Activated naive CD4-positive, alpha-beta T cell treated with anti-CD3 and anti-CD28 coated beads for 36 hours (primary cell): ENCODE measurements at regions of chr1 and their contacts with region 1.

Region 1: DNA sequence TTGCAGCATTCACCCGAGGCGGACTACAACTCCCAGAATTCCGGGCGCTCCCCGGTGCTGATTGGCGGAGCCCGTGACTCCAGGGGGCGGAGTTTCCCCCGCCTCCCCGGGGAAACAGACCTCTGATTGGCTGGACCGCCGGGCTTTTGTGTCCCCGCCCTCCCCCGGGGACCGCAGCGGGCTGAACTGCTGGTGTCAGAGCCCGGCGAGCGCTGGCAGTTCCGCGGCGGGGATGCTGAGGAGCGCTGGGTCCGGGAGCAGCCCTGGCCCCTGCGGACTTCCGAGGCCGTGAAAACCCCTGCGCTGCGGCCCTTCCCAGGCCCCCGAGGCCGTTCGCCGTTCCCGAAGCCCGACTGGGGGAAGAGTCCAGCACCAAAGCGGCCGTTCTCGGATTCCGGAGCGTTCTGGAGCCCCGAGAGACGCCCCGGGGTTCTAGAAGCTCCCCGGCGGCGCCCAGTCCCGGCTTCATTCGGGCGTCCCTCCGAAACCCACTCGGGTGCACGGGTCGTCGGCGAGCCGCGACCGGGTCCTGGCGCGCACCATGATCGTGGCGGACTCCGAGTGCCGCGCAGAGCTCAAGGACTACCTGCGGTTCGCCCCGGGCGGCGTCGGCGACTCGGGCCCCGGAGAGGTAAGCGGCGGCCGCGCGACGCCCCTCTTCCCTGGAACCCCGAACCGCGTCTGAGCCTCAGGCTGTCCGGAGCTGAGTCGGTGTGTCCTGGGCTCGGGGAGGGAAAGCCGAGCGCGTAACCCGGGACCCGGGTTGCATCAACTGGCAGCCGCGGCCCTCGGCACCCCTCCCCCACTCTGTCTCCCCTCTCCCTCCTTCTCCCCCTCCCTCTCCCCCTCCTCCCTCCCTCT is at the start of gene SESN2:
- DNase-seq: peak; percentile 100
- H3K4me3 Mint-ChIP-seq: peak within 1 kb of the TSS; percentile 68
- H3K27ac Mint-ChIP-seq: peak within 1 kb of the TSS; percentile 94
- H3K4me1 Mint-ChIP-seq: peaks cover 45% of the 10 kb centered on the region
- H3K27me3 Mint-ChIP-seq: no peaks in the 10 kb centered on the region
- total RNA-seq, gene SESN2: 46.2 to 46.9 TPM

Region 2: DNA sequence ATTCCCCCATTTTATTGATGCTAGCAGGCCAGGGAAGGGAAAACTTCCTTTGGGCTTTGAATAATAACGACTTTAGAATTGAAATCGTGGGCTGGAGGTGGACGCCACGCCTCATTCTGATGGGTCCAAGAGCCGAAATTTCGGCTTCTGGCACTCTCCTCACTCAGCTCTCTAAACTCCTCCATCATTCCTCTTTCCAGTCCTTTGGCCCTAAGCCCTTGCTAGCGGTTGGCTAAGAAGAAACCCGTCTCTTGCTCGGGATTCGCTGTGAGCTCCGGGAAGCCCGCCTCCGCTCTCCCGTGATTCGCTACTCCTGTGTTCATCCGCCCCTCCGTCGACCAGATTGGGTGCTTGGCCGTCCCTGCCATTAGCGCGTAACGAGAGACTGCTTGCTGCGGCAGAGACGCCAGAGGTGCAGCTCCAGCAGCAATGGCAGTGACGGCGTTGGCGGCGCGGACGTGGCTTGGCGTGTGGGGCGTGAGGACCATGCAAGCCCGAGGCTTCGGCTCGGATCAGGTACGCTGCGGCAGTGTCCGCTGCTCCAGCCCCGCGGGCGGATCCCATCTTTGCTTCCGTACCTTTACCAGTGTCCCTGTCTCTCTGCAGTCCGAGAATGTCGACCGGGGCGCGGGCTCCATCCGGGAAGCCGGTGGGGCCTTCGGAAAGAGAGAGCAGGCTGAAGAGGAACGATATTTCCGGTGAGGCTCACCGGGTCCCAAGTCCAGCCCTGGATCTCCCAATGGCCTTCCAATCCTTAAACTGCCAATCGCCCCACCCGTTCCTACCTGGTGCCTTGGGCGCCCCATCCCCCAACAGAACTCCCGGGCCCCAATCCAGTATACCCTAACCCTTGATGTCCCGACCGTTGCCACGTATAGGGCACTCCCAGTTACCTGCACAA is 23.5 kb before region 1 on chr1 and contains the start of gene ATP5IF1:
- CTCF ChIA-PET with region 1: no interaction called
- intact Hi-C with region 1: loop called (anchors 1 kb)
- DNase-seq: peak; percentile 98
- H3K4me3 Mint-ChIP-seq: no peak within 1 kb of the TSS
- H3K27ac Mint-ChIP-seq: no peak within 1 kb of the TSS
- H3K4me1 Mint-ChIP-seq: peaks cover 23% of the 10 kb centered on the region
- H3K27me3 Mint-ChIP-seq: no peaks in the 10 kb centered on the region
- total RNA-seq, gene ATP5IF1: 182 to 185 TPM

Region 3: GRCh38 chr1:28301471-28302174 is 42.1 kb after region 1 on chr1:
- CTCF ChIA-PET with region 1: no interaction called
- intact Hi-C with region 1: no loop called
- DNase-seq: no peak
- H3K4me3 Mint-ChIP-seq: no peak overlapping the region
- H3K27ac Mint-ChIP-seq: no peak overlapping the region
- H3K4me1 Mint-ChIP-seq: no peaks in the 10 kb centered on the region
- H3K27me3 Mint-ChIP-seq: peaks cover 2% of the 10 kb centered on the region

Region 4: GRCh38 chr1:28552758-28553663 is 293.5 kb after region 1 on chr1 and contains the start of gene TRNAU1AP:
- CTCF ChIA-PET with region 1: interaction called, 3 read pairs
- intact Hi-C with region 1: loop called (anchors 1 kb)
- DNase-seq: peak; percentile 99
- H3K4me3 Mint-ChIP-seq: peak within 1 kb of the TSS; percentile 94
- H3K27ac Mint-ChIP-seq: peak within 1 kb of the TSS; percentile 97
- H3K4me1 Mint-ChIP-seq: peaks cover 19% of the 10 kb centered on the region
- H3K27me3 Mint-ChIP-seq: no peaks in the 10 kb centered on the region
- total RNA-seq, gene TRNAU1AP: 36.7 to 39.4 TPM

Region 5: GRCh38 chr1:28860332-28861073 is 601.0 kb after region 1 on chr1:
- CTCF ChIA-PET with region 1: no interaction called
- intact Hi-C with region 1: no loop called
- DNase-seq: no peak
- H3K4me3 Mint-ChIP-seq: no peak overlapping the region
- H3K27ac Mint-ChIP-seq: no peak overlapping the region
- H3K4me1 Mint-ChIP-seq: no peaks in the 10 kb centered on the region
- H3K27me3 Mint-ChIP-seq: no peaks in the 10 kb centered on the region